Calu3 (cell line): ENCODE measurements at regions of chr7 and their contacts with region 1.

Region 1: DNA sequence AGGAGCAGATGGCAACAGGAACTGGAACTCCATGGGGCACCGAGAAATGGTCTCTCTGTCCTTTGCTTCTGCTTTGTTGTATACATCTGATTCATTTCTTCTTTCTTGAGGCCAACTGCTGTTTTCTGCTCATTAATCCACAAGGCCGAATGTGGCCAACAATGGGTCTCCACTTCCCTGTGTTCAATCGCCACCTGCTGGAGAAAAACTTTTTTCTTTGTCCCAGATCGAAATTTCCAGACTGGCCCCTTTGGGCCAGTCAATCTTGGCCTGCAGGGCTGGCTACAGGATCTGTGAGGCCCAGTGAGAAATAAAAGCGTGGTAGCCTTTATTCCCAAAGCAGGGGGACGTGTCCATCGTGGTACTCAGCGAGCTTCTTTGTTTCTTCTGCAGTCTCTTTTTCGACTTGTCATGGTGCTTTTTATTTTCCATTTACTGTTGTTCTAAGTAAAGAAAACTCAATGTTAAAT is 58.8 kb downstream of the PARP12 start:
- DNase-seq: peak; percentile 63
- H3K4me3 Mint-ChIP-seq: no peak overlapping the region
- H3K27ac Mint-ChIP-seq: no peak overlapping the region
- H3K4me1 Mint-ChIP-seq: no peaks in the 10 kb centered on the region
- H3K27me3 Mint-ChIP-seq: no peaks in the 10 kb centered on the region
- CTCF ChIP-seq: peak; percentile 68

Region 2: GRCh38 chr7:139502226-139502625 is 501.7 kb before region 1 on chr7:
- CTCF ChIA-PET with region 1: interaction called, 3 read pairs
- intact Hi-C with region 1: loop called (anchors 5 kb)
- DNase-seq: no peak
- H3K4me3 Mint-ChIP-seq: no peak overlapping the region
- H3K27ac Mint-ChIP-seq: no peak overlapping the region
- H3K4me1 Mint-ChIP-seq: no peaks in the 10 kb centered on the region
- H3K27me3 Mint-ChIP-seq: peaks cover 26% of the 10 kb centered on the region
- CTCF ChIP-seq: no peak

Region 3: GRCh38 chr7:139620676-139621344 is 383.1 kb before region 1 on chr7:
- CTCF ChIA-PET with region 1: interaction called, 11 read pairs
- intact Hi-C with region 1: no loop called
- DNase-seq: peak; percentile 86
- H3K4me3 Mint-ChIP-seq: no peak overlapping the region
- H3K27ac Mint-ChIP-seq: no peak overlapping the region
- H3K4me1 Mint-ChIP-seq: no peaks in the 10 kb centered on the region
- H3K27me3 Mint-ChIP-seq: no peaks in the 10 kb centered on the region
- CTCF ChIP-seq: peak; percentile 85

Region 4: DNA sequence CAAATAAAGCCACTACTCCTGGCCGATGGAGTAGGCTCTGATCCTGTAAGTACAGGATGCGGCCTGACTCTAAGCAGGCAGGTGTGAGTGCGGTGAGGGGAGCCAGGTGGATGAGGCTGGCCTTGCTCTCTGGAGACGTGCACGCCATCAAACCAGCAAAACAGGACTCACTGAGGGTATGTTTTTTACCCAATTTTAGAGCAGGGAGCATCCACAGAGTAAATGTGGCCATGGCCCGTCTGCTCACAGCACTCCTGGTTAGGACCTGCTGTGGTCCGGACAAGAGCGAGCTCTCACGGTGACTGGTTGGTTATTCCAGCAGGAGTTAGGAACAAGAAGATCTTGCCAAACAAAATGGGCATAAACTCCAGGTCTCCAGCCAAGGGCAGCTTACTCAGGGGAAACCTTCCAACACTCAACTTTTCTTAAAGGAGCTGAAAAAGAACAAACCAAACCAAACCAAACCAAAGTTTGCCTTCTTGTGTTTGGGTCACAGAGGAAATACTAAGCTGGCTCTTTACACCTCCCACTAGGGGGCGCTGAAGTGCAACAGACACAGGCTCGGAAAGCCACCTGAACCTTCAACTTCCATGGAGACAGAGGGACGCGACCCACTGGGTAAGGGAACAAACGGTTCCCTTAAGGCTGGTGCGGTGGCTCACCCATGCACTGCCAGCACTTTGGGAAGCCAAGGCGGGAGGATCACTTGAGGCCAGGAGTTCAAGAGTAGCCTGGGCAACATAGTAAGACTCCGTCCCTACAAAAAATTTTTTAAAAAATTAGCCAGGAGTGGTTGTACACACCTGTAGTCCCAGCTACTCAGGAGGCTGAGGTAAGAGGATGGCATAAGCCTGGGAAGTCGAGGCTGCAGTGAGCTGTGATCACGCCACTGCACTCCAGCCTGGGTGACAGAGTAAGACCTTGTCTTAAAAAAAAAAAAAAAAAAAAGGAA is 358.1 kb before region 1 on chr7:
- CTCF ChIA-PET with region 1: interaction called, 21 read pairs
- intact Hi-C with region 1: loop called (anchors 1 kb)
- DNase-seq: peak; percentile 89
- H3K4me3 Mint-ChIP-seq: no peak overlapping the region
- H3K27ac Mint-ChIP-seq: no peak overlapping the region
- H3K4me1 Mint-ChIP-seq: peaks cover 8% of the 10 kb centered on the region
- H3K27me3 Mint-ChIP-seq: no peaks in the 10 kb centered on the region
- CTCF ChIP-seq: peak; percentile 85

Region 5: GRCh38 chr7:139855498-139856270 is 148.3 kb before region 1 on chr7:
- CTCF ChIA-PET with region 1: no interaction called
- intact Hi-C with region 1: no loop called
- DNase-seq: no peak
- H3K4me3 Mint-ChIP-seq: no peak overlapping the region
- H3K27ac Mint-ChIP-seq: no peak overlapping the region
- H3K4me1 Mint-ChIP-seq: no peaks in the 10 kb centered on the region
- H3K27me3 Mint-ChIP-seq: no peaks in the 10 kb centered on the region
- CTCF ChIP-seq: no peak

Region 6: DNA sequence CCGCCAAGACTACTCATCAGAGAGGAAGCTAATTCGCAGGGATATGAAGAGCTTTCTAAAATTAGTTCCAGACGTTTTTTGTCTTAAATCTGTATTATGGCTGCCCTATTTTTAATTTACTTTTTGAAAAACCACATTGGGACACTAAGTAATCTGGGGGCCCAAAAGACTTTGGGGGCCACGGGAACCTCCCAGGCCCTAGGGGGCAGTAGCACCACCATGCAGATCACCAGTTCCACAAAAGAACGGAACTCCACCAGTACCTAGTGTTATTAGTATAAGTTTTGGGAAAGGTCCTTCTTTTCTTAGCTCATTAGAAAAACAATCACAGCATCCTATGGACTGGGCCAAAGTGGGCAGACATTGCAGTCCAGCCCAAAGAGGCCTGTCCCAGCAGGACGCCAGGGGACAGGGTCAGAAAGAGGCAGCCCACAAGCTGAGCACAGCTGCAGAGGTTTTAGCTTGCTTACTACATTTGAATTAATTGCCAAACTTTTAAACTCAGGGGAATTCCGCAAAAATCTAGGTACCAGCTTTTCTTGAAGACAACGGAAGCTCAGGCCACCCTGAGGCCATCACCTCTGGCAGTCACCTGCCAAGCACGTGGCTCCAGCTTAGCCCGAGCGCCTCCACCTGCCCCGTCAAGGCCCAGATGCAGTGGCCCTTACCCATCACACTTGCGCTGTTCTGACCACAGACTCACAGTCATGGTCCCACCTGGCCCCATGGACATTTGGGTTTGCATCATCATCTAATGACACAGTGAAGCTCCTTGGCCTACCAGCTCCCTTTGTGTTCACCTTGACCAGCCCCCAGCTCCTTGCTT is 16.0 kb before region 1 on chr7:
- CTCF ChIA-PET with region 1: interaction called, 11 read pairs
- intact Hi-C with region 1: no loop called
- DNase-seq: no peak
- H3K4me3 Mint-ChIP-seq: no peak overlapping the region
- H3K27ac Mint-ChIP-seq: no peak overlapping the region
- H3K4me1 Mint-ChIP-seq: no peaks in the 10 kb centered on the region
- H3K27me3 Mint-ChIP-seq: no peaks in the 10 kb centered on the region
- CTCF ChIP-seq: no peak

Region 7: DNA sequence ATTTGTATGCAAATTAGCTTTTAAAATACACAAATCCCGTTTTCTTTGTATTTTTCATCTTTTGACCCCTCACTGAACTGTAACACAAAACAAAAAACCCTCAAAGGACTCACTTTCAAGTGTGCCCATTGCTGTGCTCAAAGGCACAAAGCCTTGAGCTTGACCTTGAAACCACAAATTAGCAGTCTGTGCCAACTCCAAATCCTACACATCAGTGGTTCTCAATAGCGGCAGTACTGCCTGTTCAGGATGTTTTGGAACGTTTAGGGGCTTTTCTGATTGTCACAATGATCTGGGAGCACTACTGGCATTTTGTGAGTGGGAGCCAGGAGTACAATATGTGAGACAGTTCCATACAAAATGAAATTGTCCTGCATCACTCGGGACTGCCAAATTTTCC is 117.4 kb after region 1 on chr7:
- CTCF ChIA-PET with region 1: no interaction called
- intact Hi-C with region 1: no loop called
- DNase-seq: no peak
- H3K4me3 Mint-ChIP-seq: no peak overlapping the region
- H3K27ac Mint-ChIP-seq: no peak overlapping the region
- H3K4me1 Mint-ChIP-seq: no peaks in the 10 kb centered on the region
- H3K27me3 Mint-ChIP-seq: no peaks in the 10 kb centered on the region
- CTCF ChIP-seq: no peak

Region 8: DNA sequence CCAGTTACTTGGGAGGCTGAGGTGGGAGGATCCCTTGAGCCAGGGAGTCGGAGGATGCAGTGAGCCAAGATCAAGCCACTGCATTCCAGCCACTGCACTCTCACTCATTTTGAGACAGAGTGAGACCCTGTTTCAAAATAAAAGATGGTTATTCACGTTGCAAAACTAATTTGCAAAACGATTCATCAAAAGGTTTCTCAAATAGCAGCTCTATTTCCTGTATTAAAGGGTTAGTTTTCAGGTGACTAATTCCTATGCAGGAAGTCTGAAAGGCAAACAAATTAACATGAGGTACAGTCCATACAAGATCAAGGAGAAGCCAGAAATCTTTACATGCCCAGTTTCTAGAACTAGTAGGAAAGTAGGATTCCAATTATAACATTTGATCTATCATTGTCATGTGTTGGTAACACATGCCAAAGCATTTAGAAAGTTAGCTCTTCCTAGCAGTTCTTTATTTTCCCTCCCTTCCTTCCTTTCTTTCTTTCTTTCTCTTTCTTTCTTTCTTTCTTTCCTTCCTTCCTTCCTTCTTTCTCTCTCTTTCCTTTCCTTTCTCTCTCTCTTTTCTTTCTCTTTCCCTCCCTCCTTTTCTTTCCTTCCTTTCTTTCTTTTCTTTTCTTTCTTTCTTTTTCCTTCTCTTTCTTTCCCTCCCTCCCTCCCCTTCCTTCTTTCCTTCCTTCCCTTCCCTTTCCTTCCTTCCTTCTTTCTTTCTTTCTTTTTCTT is 587.4 kb after region 1 on chr7:
- CTCF ChIA-PET with region 1: no interaction called
- intact Hi-C with region 1: no loop called
- DNase-seq: no peak
- H3K4me3 Mint-ChIP-seq: no peak overlapping the region
- H3K27ac Mint-ChIP-seq: no peak overlapping the region
- H3K4me1 Mint-ChIP-seq: peaks cover 8% of the 10 kb centered on the region
- H3K27me3 Mint-ChIP-seq: peaks cover 13% of the 10 kb centered on the region
- CTCF ChIP-seq: no peak